Psoas muscle (tissue), 8 donors: ENCODE measurements at regions of chr15 and their contacts with region 1.

Region 1: DNA sequence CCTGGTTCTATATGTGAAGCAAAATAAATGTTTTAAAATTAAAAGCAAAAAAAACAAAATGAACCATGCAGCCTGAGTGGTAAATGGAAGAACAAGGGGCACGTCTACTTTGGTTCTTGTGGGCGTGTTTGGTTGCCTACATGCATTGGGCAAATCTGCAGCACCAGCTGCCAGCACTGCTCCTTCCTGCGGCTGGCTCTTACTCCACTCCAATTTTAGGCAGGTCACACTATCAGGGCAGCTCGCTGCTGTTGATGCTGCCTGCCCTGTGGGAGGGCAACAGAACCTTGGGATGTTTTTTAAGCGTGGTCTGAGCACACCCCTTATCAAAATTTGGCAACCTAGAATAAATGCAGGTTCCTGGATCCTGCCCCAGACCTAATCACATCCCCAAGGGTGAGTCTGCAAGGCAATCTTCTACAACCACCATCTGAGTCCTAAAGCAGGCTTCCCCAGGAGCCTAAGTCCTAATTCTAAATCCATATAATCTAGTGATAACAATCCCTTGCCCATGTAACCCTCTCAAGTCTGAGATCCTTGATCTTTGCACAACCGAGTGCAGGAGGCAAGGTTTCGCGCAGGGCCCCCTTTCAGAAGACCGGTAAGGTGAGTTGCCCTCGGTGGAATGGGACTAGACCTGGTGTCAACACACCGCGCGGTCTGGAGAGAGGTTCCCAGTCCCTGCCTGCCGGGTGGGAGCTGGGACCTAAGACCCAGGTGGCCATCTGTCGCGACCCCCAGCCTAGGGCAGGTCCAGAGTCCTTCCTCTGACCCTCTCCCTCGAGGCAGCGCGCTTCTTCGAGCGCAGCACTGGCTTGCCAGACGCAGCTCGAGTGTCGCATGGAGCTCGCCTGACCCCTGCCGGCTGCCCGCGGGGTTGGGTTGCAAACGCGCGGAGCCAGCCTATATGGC is 15.9 kb downstream of the IVD start:
- DNase-seq: peak; percentile 81 to 90
- ATAC-seq: peak; percentile 90 to 95 (median 92)
- H3K4me3 ChIP-seq: no peak overlapping the region
- H3K27ac ChIP-seq: peak overlapping the region; percentile 33
- H3K4me1 ChIP-seq: peaks cover 29% of the 10 kb centered on the region
- H3K27me3 ChIP-seq: no peaks in the 10 kb centered on the region
- CTCF ChIP-seq: peak; percentile 95

Region 2: DNA sequence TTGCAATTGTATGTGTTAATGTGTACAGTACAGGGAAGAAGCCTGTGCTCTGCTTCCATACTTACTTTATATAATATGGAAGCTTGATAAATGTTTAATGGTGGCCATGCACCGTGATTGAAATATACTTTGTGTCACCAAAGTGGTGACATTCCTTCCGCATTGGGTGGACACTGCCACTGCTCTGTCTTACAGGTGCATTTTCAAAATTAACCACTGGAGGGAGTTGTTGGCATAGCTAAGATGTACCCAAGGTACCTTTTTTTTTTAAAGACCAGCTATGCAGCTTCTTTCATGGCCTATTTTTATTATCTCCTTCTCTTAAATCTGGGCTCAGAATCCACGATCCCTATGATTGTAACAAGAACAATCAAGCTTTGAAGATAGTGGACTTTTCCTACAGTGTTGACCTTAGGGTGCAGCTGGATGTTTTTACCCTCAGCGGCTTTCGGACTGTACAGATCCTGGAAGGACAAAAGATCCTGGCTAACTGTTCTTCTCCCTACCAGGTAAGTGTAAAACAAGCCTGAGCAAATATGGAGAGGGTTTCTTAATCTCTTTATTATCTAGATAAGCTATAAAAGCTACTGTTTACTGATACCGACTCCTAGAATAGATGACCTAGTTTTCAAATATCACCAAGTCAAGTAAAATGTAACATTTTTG is 204.2 kb before region 1 on chr15:
- intact Hi-C with region 1: loop called in 1 of 2 experiments (anchors 5 kb)
- DNase-seq: peak in 1 of 2 donors; percentile 10
- ATAC-seq: peak; percentile 89 to 96 (median 92)
- H3K4me3 ChIP-seq: no peak overlapping the region
- H3K27ac ChIP-seq: no peak overlapping the region
- H3K4me1 ChIP-seq: no peaks in the 10 kb centered on the region
- H3K27me3 ChIP-seq: no peaks in the 10 kb centered on the region
- CTCF ChIP-seq: peak; percentile 90

Region 3: DNA sequence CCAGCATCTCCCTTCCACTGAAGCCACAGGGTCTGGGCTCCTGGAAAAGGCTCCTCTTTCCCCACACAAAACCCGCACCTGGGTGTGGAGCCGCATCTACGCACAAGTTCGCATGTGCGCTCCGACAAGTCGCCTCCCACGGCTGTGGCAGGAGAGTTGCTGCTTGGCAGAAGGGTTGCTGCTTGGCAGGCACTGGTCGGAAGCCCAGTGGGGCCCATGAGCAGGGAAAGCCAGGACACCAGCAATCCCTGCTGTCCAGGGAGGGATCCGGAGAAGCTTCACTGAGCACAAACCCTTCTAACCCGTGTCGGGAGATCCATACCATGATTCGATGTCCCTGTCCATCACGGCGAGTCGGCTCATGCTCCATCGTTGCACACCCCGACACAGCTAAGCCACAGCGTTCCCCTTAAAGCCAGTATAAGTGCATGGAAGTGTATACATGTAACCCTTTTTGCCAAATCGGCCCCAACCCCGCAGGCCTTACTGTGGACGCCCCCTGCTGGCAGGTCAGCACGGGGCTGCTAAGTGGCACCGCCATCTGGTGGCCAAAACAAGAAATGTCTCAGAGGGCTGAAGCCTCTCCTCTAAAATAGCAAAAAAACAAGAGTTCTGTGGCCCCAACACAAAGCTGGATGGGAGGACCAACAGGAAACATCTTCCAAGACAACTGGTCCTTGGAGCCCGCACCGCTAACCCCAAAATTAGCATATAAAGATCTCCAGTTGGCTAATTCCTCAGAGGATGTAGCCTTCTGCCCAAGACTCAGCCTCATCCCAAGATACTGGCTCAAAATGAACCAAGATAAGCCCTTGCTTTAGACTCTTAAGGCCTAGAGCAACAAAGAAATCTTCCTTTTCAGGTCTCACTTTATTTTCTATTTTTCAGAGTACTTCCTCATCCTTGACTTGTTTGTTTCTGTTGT is 146.9 kb before region 1 on chr15:
- intact Hi-C with region 1: loop called (anchors 1 to 5 kb)
- DNase-seq: peak; percentile 80 to 90
- ATAC-seq: peak; percentile 80 to 91 (median 82)
- H3K4me3 ChIP-seq: no peak overlapping the region
- H3K27ac ChIP-seq: no peak overlapping the region
- H3K4me1 ChIP-seq: no peaks in the 10 kb centered on the region
- H3K27me3 ChIP-seq: peaks cover 0 to 12% (median 8%) of the 10 kb centered on the region in 3 donors
- CTCF ChIP-seq: peak; percentile 100

Region 4: GRCh38 chr15:40323239-40323952 is 98.1 kb before region 1 on chr15 and contains the start of gene INAFM2:
- intact Hi-C with region 1: loop called (anchors 1 to 5 kb)
- DNase-seq: peak; percentile 92 to 96
- ATAC-seq: peak; percentile 89 to 94 (median 92)
- H3K4me3 ChIP-seq: peak within 1 kb of the TSS; percentile 86
- H3K27ac ChIP-seq: peak within 1 kb of the TSS; percentile 86
- H3K4me1 ChIP-seq: peaks cover 27% of the 10 kb centered on the region
- H3K27me3 ChIP-seq: no peaks in the 10 kb centered on the region
- CTCF ChIP-seq: peak; percentile 68
- total RNA-seq, gene INAFM2: 22.3 to 32.4 (median 28.9) TPM

Region 5: GRCh38 chr15:40338041-40338657 is 83.4 kb before region 1 on chr15:
- intact Hi-C with region 1: loop called (anchors 1 to 5 kb)
- DNase-seq: peak; percentile 70 to 82
- ATAC-seq: peak in 1 of 4 donors; percentile 25
- H3K4me3 ChIP-seq: peak overlapping the region; percentile 66
- H3K27ac ChIP-seq: peak overlapping the region; percentile 93
- H3K4me1 ChIP-seq: peaks cover 81% of the 10 kb centered on the region
- H3K27me3 ChIP-seq: no peaks in the 10 kb centered on the region
- CTCF ChIP-seq: peak; percentile 50

Region 6: GRCh38 chr15:40344631-40345120 is 76.8 kb before region 1 on chr15:
- intact Hi-C with region 1: loop called (anchors 1 to 5 kb)
- DNase-seq: peak; percentile 64 to 82
- ATAC-seq: peak in 2 of 4 donors; percentile 15 to 29
- H3K4me3 ChIP-seq: no peak overlapping the region
- H3K27ac ChIP-seq: no peak overlapping the region
- H3K4me1 ChIP-seq: peaks cover 33% of the 10 kb centered on the region
- H3K27me3 ChIP-seq: no peaks in the 10 kb centered on the region
- CTCF ChIP-seq: peak; percentile 73

Region 7: GRCh38 chr15:40367686-40368611 is 53.6 kb before region 1 on chr15:
- intact Hi-C with region 1: loop called in 1 of 2 experiments (anchors 5 kb)
- DNase-seq: peak; percentile 85 to 93
- ATAC-seq: peak; percentile 79 to 86 (median 84)
- H3K4me3 ChIP-seq: peak overlapping the region; percentile 55
- H3K27ac ChIP-seq: peak overlapping the region; percentile 81
- H3K4me1 ChIP-seq: peaks cover 18% of the 10 kb centered on the region
- H3K27me3 ChIP-seq: no peaks in the 10 kb centered on the region
- CTCF ChIP-seq: peak; percentile 85

Region 8: DNA sequence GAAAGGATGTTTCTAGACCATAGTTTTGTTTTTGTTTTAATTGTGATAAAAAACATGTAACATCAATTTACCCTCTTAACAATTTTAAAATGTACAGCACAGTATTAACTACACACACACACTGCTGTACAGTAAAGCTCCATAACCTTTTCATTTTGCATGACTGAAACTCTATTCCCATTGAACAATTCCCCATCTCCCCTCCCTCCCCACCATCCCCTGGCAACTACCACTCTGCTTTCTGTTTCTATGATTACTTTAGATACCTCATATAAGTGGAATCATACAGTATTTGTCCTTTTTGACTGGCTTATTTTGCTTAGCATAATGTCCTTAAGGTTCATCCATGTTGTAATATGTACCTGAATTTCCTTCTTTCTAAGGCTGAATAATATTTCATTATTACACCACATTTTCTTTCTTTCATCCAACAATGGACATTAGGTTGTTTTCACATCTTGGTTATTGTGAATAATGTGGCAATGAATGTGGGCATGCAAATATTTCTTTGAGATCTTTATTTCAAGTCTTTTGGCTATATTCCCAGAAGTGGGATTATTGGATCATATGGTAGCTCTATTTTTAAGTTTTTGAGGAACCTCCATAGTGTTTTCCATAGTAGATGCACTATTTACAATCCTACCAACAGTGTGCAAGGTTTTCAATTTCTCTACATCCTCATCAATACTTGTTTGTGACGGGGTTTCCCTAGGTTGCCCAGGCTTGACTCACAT is 60.0 kb after region 1 on chr15:
- intact Hi-C with region 1: no loop called
- DNase-seq: no peak
- ATAC-seq: no peak
- H3K4me3 ChIP-seq: no peak overlapping the region
- H3K27ac ChIP-seq: no peak overlapping the region
- H3K4me1 ChIP-seq: no peaks in the 10 kb centered on the region
- H3K27me3 ChIP-seq: no peaks in the 10 kb centered on the region
- CTCF ChIP-seq: no peak

Region 9: GRCh38 chr15:40536501-40536900 is 115.0 kb after region 1 on chr15:
- intact Hi-C with region 1: no loop called
- DNase-seq: no peak
- ATAC-seq: no peak
- H3K4me3 ChIP-seq: no peak overlapping the region
- H3K27ac ChIP-seq: no peak overlapping the region
- H3K4me1 ChIP-seq: peaks cover 10% of the 10 kb centered on the region
- H3K27me3 ChIP-seq: no peaks in the 10 kb centered on the region
- CTCF ChIP-seq: no peak